AG04450 (cell line): ENCODE measurements at regions of chr15 and their contacts with region 1.

Region 1: GRCh38 chr15:34616613-34617012 is 33.2 kb upstream of the GOLGA8B start:
- DNase-seq: no peak
- H3K4me3 ChIP-seq: no peak overlapping the region
- H3K27ac ChIP-seq: no peak overlapping the region
- H3K27me3 ChIP-seq: no peaks in the 10 kb centered on the region
- CTCF ChIP-seq: peak; percentile 33; the same call in 1 of the 2 replicates

Region 2: DNA sequence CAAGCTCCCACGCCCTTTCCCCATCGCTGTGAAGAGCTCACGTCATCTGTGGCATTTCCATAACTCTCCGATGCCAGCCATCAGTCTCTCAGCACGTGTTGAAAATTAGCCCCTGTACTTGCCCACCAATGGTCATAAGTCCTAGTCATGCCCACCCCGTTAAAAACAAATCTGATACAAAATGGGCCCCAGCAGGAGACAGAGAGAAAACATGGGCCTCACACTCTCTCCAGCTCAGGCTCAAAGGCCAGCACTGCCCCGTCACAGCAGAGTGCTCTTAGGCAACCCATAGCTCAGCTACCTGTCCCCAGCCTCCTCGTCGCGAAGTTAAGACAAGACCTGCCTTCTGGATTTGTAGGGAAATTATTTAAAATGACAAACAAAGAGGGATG is 38.3 kb before region 1 on chr15:
- CTCF ChIA-PET with region 1: no interaction called
- POLR2A ChIA-PET with region 1: no interaction called
- DNase-seq: no peak
- H3K4me3 ChIP-seq: no peak overlapping the region
- H3K27ac ChIP-seq: no peak overlapping the region
- H3K27me3 ChIP-seq: no peaks in the 10 kb centered on the region
- CTCF ChIP-seq: no peak

Region 3: GRCh38 chr15:34594361-34594760 is 22.3 kb before region 1 on chr15:
- CTCF ChIA-PET with region 1: no interaction called
- POLR2A ChIA-PET with region 1: no interaction called
- DNase-seq: no peak
- H3K4me3 ChIP-seq: no peak overlapping the region
- H3K27ac ChIP-seq: no peak overlapping the region
- H3K27me3 ChIP-seq: no peaks in the 10 kb centered on the region
- CTCF ChIP-seq: no peak

Region 4: DNA sequence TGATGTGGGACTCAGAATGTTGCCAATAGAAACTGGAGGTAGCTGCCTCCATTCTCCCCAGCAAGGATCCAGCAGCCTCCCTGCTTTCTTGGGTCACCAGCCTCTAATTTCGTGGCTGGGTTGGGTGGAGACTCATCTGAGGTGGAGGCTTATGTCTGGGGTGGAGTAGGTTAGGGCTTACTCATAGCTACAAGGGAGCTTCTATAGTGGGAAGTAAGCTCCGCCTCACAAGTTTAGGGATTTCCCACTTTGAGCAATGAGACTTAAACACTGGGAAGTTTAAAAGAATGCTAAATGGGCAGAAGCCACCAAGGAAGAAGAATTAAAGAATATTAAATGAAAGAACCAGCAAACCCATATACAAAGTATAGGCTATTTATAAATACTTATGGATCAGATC is 74.4 kb after region 1 on chr15:
- CTCF ChIA-PET with region 1: no interaction called
- POLR2A ChIA-PET with region 1: no interaction called
- DNase-seq: peak; percentile 10
- H3K4me3 ChIP-seq: no peak overlapping the region
- H3K27ac ChIP-seq: no peak overlapping the region
- H3K27me3 ChIP-seq: no peaks in the 10 kb centered on the region
- CTCF ChIP-seq: no peak

Region 5: GRCh38 chr15:34708422-34708821 is 91.8 kb after region 1 on chr15:
- CTCF ChIA-PET with region 1: interaction called, 18 read pairs
- POLR2A ChIA-PET with region 1: interaction called, 3 read pairs
- DNase-seq: peak; percentile 32
- H3K4me3 ChIP-seq: no peak overlapping the region
- H3K27ac ChIP-seq: no peak overlapping the region
- H3K27me3 ChIP-seq: no peaks in the 10 kb centered on the region
- CTCF ChIP-seq: peak; percentile 96

Region 6: GRCh38 chr15:34927726-34928125 is 311.1 kb after region 1 on chr15:
- CTCF ChIA-PET with region 1: interaction called, 151 read pairs
- POLR2A ChIA-PET with region 1: no interaction called
- DNase-seq: no peak
- H3K4me3 ChIP-seq: no peak overlapping the region
- H3K27ac ChIP-seq: no peak overlapping the region
- H3K27me3 ChIP-seq: no peaks in the 10 kb centered on the region
- CTCF ChIP-seq: no peak